ENCODE measurements at regions of chr5 and their contacts with region 1.

Region 1: GRCh38 chr5:150458819-150459557 is 9.4 kb upstream of the RPS14 start:
- DNase-seq: peak; percentile 76
- H3K4me3 Mint-ChIP-seq: no peak overlapping the region
- H3K27ac Mint-ChIP-seq: peak overlapping the region; percentile 57
- H3K4me1 Mint-ChIP-seq: peaks cover 13% of the 10 kb centered on the region
- H3K27me3 Mint-ChIP-seq: no peaks in the 10 kb centered on the region
- CTCF ChIP-seq: peak; percentile 98

Region 2: DNA sequence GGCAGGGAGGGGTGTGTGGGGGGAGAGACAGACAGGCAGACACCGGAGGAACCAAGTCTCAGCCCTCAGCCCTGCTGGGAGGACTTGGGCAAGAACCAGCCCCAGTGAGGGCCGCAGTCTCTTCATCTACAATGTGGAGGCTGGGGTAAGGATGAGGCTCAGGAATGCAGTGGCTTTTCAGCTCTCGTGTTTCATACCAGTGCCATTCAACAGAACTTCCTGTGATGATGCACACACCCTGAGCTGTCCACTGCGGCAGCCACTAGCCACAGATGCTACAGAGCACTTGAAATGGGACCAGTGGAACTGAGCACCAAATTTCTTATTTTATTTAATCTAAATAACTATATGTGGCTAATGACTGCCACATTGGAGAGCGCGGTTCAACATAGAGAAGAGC is 180.1 kb before region 1 on chr5:
- CTCF ChIA-PET with region 1: no interaction called
- POLR2A ChIA-PET with region 1: no interaction called
- intact Hi-C with region 1: no loop called
- DNase-seq: no peak
- H3K4me3 Mint-ChIP-seq: no peak overlapping the region
- H3K27ac Mint-ChIP-seq: no peak overlapping the region
- H3K4me1 Mint-ChIP-seq: peaks cover 6% of the 10 kb centered on the region
- H3K27me3 Mint-ChIP-seq: peaks cover 16% of the 10 kb centered on the region
- CTCF ChIP-seq: no peak

Region 3: GRCh38 chr5:150409638-150410523 is 49.1 kb before region 1 on chr5:
- CTCF ChIA-PET with region 1: no interaction called
- POLR2A ChIA-PET with region 1: no interaction called
- intact Hi-C with region 1: no loop called
- DNase-seq: peak; percentile 96
- H3K4me3 Mint-ChIP-seq: no peak overlapping the region
- H3K27ac Mint-ChIP-seq: no peak overlapping the region
- H3K4me1 Mint-ChIP-seq: peaks cover 9% of the 10 kb centered on the region
- H3K27me3 Mint-ChIP-seq: no peaks in the 10 kb centered on the region
- CTCF ChIP-seq: no peak

Region 4: GRCh38 chr5:150428106-150428876 is 30.7 kb before region 1 on chr5:
- CTCF ChIA-PET with region 1: no interaction called
- POLR2A ChIA-PET with region 1: no interaction called
- intact Hi-C with region 1: no loop called
- DNase-seq: no peak
- H3K4me3 Mint-ChIP-seq: no peak overlapping the region
- H3K27ac Mint-ChIP-seq: no peak overlapping the region
- H3K4me1 Mint-ChIP-seq: no peaks in the 10 kb centered on the region
- H3K27me3 Mint-ChIP-seq: no peaks in the 10 kb centered on the region
- CTCF ChIP-seq: no peak

Region 5: GRCh38 chr5:150511578-150512367 is 52.8 kb after region 1 on chr5:
- CTCF ChIA-PET with region 1: interaction called, 15 read pairs
- POLR2A ChIA-PET with region 1: no interaction called
- intact Hi-C with region 1: no loop called
- DNase-seq: peak; percentile 64
- H3K4me3 Mint-ChIP-seq: peak overlapping the region; percentile 51
- H3K27ac Mint-ChIP-seq: peak overlapping the region; percentile 78
- H3K4me1 Mint-ChIP-seq: peaks cover 59% of the 10 kb centered on the region
- H3K27me3 Mint-ChIP-seq: no peaks in the 10 kb centered on the region
- CTCF ChIP-seq: no peak

Region 6: GRCh38 chr5:150532996-150533395 is 74.0 kb after region 1 on chr5:
- CTCF ChIA-PET with region 1: interaction called, 14 read pairs
- POLR2A ChIA-PET with region 1: no interaction called
- intact Hi-C with region 1: no loop called
- DNase-seq: no peak
- H3K4me3 Mint-ChIP-seq: no peak overlapping the region
- H3K27ac Mint-ChIP-seq: no peak overlapping the region
- H3K4me1 Mint-ChIP-seq: peaks cover 9% of the 10 kb centered on the region
- H3K27me3 Mint-ChIP-seq: no peaks in the 10 kb centered on the region
- CTCF ChIP-seq: no peak

Region 7: DNA sequence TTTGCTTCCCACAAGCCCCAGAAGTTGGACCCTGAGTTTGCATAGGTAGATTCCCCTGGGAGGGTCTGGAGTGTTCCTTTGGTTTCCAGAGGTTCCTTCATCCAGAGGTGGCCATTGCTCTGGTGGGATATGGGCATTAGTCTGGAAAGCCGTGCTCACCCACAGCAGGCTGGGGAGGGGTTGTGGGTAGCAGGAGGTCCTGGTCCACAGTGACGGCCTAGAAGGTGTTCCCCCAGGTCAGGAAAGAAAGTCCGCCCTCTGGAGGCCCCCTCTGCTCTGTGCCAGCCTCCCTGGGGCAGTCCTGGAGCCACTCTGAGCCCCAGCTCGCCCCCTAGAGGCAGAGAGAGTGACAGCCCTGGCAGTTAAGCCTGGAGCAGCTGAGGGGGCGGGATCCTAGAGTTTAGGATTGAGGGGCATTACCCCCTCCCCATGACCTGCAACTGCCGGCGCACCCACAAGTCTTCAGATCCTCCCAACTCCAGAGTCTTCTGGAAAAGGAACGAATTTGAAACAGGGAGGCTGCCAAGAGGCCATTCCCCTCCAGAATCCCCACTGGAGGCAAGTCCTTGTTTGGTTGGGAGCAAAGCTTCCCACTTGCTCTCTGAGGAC is 85.7 kb after region 1 on chr5:
- CTCF ChIA-PET with region 1: interaction called, 142 read pairs
- POLR2A ChIA-PET with region 1: interaction called, 10 read pairs
- intact Hi-C with region 1: loop called (anchors 1 kb)
- DNase-seq: peak; percentile 91
- H3K4me3 Mint-ChIP-seq: no peak overlapping the region
- H3K27ac Mint-ChIP-seq: no peak overlapping the region
- H3K4me1 Mint-ChIP-seq: peaks cover 26% of the 10 kb centered on the region
- H3K27me3 Mint-ChIP-seq: no peaks in the 10 kb centered on the region
- CTCF ChIP-seq: peak; percentile 99

Region 8: DNA sequence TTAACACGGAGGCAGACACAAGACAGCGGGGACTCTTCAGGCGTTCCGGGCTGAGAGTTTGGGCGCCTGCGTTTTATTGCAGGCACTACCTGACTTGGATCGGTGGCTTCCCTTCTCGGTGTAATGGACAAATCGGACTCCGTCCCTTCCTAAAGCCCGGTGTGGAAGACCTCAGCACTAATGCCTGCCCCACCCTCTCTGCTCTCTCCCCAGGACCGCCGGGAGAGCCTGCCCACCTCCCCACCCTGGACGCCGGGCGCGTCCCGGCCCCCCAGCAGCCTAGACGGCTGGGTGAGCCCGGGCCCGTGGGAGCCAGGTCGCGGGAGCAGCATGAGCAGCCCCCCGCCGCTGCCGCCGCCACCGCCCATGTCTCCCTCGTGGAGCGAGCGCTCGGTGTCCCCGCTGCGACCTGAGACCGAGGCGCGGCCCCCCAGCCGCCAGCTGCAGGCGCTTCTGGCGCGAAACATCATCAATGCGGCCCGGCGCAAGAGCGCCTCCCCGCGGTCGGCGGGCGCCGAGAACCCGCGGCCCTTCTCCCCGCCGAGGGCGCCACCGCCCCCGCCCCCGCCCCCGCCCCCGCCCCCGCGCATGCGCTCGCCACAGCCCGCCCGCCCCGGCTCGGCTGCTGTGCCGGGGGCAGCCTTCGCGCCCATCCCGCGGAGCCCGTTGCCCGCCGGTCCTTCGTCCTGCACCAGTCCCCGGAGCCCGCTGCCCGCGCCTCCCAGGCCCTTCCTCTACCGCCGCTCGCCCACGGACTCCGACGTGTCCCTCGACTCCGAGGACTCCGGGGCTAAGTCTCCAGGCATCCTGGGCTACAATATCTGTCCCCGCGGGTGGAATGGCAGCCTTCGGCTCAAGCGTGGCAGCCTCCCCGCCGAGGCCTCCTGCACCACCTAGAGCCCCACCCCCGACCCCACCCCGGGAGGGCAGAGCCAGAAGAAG is 197.5 kb after region 1 on chr5:
- CTCF ChIA-PET with region 1: interaction called, 11 read pairs
- POLR2A ChIA-PET with region 1: no interaction called
- intact Hi-C with region 1: loop called (anchors 1 kb)
- DNase-seq: peak; percentile 58
- H3K4me3 Mint-ChIP-seq: peak overlapping the region; percentile 71
- H3K27ac Mint-ChIP-seq: no peak overlapping the region
- H3K4me1 Mint-ChIP-seq: peaks cover 14% of the 10 kb centered on the region
- H3K27me3 Mint-ChIP-seq: peaks cover 11% of the 10 kb centered on the region
- CTCF ChIP-seq: peak; percentile 99

Measured in MCF 10A (cell line).